ENCODE measurements at regions of chr6 and their contacts with region 1.

Region 1: DNA sequence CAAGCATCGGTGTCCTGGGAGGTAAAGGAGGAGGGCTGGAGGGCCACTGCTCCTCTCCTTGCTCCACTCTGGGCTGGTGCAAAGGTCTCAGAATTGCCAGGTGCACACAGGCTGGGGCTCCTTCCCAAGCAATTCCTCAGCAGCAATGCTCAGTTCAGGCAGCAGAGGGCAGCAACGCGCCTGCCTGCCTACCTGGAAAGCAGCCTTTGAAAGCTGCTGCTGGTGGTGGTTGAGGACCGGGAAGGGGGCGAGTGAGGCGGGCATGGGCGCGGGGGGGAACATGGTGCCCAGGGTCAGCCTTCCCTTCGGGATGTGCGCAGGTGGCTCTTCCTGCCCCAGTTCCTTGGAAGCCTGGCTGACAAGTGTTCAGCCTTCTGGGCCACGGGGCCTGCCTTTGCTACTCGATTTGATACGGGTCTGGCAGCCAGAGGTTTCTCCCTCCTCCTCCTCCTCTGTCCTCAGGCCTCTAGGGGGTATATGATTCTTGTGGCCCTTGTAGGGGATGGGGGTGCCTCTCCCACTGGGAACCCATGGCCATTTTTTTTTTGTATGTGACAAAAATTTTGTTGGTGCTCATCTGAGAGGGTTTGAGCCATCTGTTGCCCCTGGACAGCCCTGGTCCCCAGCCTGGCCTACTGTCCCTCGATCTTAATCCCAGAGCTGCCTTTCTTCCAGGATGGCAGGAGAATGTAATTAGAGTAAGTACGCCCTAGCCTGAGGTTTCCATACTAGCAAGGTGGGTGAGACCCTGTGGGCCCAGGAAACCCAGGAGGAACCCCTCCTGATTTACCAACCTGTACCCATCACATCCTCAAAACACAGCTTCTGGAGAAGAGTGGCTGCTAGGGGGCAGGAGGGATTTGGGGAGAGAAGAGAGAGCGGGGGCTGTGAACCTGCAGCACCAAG is 20.1 kb downstream of the MRPS18A start:
- DNase-seq: peak; percentile 90
- H3K4me3 Mint-ChIP-seq: peak overlapping the region; percentile 5
- H3K27ac Mint-ChIP-seq: peak overlapping the region; percentile 65
- H3K4me1 Mint-ChIP-seq: peaks cover 22% of the 10 kb centered on the region
- H3K27me3 Mint-ChIP-seq: no peaks in the 10 kb centered on the region

Region 2: GRCh38 chr6:43758617-43759050 is 91.1 kb after region 1 on chr6:
- CTCF ChIA-PET with region 1: interaction called, 14 read pairs
- intact Hi-C with region 1: loop called (anchors 1 kb)
- DNase-seq: peak; percentile 62
- H3K4me3 Mint-ChIP-seq: no peak overlapping the region
- H3K27ac Mint-ChIP-seq: no peak overlapping the region
- H3K4me1 Mint-ChIP-seq: peaks cover 3% of the 10 kb centered on the region
- H3K27me3 Mint-ChIP-seq: no peaks in the 10 kb centered on the region

Region 3: GRCh38 chr6:43774776-43775534 is 107.5 kb after region 1 on chr6:
- CTCF ChIA-PET with region 1: interaction called, 19 read pairs
- intact Hi-C with region 1: loop called (anchors 1 kb)
- DNase-seq: peak; percentile 73
- H3K4me3 Mint-ChIP-seq: peak overlapping the region; percentile 18
- H3K27ac Mint-ChIP-seq: no peak overlapping the region
- H3K4me1 Mint-ChIP-seq: peaks cover 29% of the 10 kb centered on the region
- H3K27me3 Mint-ChIP-seq: no peaks in the 10 kb centered on the region

Region 4: GRCh38 chr6:45305546-45305945 is 1638.0 kb after region 1 on chr6:
- CTCF ChIA-PET with region 1: no interaction called
- intact Hi-C with region 1: no loop called
- DNase-seq: no peak
- H3K4me3 Mint-ChIP-seq: no peak overlapping the region
- H3K27ac Mint-ChIP-seq: no peak overlapping the region
- H3K4me1 Mint-ChIP-seq: peaks cover 35% of the 10 kb centered on the region
- H3K27me3 Mint-ChIP-seq: no peaks in the 10 kb centered on the region